Activated CD4-positive, alpha-beta memory T cell treated with anti-CD3 and anti-CD28 coated beads for 36 hours (primary cell): ENCODE measurements at regions of chr22 and their contacts with region 1.

Region 1: DNA sequence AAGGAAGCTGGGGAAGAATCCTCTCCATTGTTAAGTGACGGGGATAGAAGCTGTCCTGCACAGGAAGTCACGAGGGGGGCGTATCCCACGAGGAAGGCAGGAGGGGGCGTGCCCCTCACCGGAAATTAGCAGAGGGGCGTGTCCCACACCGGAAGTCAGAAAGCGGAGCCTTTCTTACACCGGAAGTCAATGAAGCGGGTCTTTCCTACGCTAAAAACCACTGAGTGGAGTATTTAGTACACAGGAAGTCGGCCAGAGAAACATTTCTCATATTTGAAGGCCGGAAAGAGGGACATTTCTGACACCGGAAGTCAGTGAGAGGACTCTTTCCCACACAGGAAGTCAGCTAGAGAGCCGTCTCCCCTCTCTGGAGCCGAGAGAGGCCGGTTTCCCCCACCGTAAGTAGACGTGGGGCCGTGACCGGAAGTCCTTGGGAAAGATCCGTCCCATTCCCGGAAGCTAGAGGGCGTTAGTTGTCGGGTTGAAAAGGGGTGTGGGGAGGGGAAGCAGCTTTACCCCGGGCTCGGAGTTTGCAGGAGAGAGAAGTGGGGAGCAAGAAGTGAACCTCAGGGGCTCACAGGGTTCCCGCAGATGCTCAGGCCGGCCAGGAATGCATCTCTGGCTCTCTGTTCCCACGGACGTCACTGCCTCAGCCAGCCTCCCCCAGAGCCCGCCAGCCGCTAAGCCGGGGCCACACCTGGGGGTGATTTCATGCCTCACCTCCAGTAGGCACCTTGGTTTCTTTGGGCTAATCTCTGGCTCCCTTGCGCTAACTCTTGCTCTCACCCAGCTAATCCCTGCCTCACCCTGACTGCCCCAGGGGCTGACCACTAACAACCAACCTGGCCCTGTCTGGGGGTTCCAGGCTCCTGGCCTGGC is 15.4 kb downstream of the MIAT start:
- DNase-seq: peak; percentile 97
- H3K4me3 Mint-ChIP-seq: peak overlapping the region; percentile 94
- H3K27ac Mint-ChIP-seq: peak overlapping the region; percentile 100
- H3K4me1 Mint-ChIP-seq: peaks cover 67% of the 10 kb centered on the region
- H3K27me3 Mint-ChIP-seq: no peaks in the 10 kb centered on the region

Region 2: GRCh38 chr22:26470807-26471206 is 202.0 kb before region 1 on chr22:
- CTCF ChIA-PET with region 1: no interaction called
- POLR2A ChIA-PET with region 1: no interaction called
- intact Hi-C with region 1: no loop called
- DNase-seq: no peak
- H3K4me3 Mint-ChIP-seq: no peak overlapping the region
- H3K27ac Mint-ChIP-seq: no peak overlapping the region
- H3K4me1 Mint-ChIP-seq: peaks cover 5% of the 10 kb centered on the region
- H3K27me3 Mint-ChIP-seq: no peaks in the 10 kb centered on the region

Region 3: DNA sequence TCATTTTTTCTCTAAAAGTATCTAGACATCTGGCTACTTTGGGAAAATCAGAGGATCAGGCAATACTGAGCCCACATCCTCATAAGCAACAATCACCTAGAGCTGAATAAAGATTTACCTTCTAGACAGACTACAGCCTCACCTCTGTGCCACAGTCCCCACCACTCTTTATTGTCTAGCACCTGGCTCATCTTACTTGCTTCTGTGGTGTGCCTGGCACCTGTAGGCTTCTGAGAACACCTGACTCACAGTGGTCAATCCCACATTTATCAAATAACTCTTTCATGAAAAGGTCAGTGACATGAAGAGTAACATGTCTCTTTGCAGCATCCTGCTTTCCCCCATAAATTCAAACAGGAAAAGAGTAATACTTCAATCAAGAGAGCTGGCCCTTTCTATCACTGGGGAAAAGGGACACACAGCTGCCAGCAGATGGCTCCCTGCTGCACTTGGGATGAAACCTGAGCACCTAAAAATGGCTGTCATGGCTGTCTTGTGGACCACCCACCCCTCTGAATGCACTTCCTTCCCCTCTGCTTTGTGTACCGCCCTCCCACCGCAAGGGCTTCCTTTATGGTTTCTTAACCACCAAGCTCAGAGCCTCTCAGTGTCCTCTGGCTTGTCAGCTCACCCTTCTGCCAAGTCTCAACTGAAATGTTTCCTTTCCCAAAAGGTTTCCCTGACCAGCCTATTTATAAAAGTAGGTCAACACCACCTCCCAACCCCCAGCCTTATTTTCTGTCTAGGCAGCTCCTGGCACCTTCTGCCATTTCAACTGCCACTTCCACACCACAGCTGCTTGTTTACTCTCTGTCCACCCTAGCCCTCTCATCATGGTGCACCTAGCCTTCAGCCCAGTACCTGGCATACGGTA is 169.9 kb before region 1 on chr22:
- CTCF ChIA-PET with region 1: interaction called, 7 read pairs
- POLR2A ChIA-PET with region 1: interaction called, 4 read pairs
- intact Hi-C with region 1: loop called (anchors 5 kb)
- DNase-seq: peak; percentile 75
- H3K4me3 Mint-ChIP-seq: no peak overlapping the region
- H3K27ac Mint-ChIP-seq: peak overlapping the region; percentile 87
- H3K4me1 Mint-ChIP-seq: peaks cover 20% of the 10 kb centered on the region
- H3K27me3 Mint-ChIP-seq: no peaks in the 10 kb centered on the region

Region 4: GRCh38 chr22:26610072-26610958 is 62.5 kb before region 1 on chr22:
- CTCF ChIA-PET with region 1: no interaction called
- POLR2A ChIA-PET with region 1: no interaction called
- intact Hi-C with region 1: no loop called
- DNase-seq: peak; percentile 80
- H3K4me3 Mint-ChIP-seq: no peak overlapping the region
- H3K27ac Mint-ChIP-seq: peak overlapping the region; percentile 50
- H3K4me1 Mint-ChIP-seq: peaks cover 21% of the 10 kb centered on the region
- H3K27me3 Mint-ChIP-seq: no peaks in the 10 kb centered on the region

Region 5: GRCh38 chr22:26650722-26651421 is 22.0 kb before region 1 on chr22:
- CTCF ChIA-PET with region 1: interaction called, 6 read pairs
- POLR2A ChIA-PET with region 1: interaction called, 7 read pairs
- intact Hi-C with region 1: loop called (anchors 2 kb)
- DNase-seq: peak; percentile 62
- H3K4me3 Mint-ChIP-seq: no peak overlapping the region
- H3K27ac Mint-ChIP-seq: peak overlapping the region; percentile 48
- H3K4me1 Mint-ChIP-seq: peaks cover 52% of the 10 kb centered on the region
- H3K27me3 Mint-ChIP-seq: no peaks in the 10 kb centered on the region

Region 6: DNA sequence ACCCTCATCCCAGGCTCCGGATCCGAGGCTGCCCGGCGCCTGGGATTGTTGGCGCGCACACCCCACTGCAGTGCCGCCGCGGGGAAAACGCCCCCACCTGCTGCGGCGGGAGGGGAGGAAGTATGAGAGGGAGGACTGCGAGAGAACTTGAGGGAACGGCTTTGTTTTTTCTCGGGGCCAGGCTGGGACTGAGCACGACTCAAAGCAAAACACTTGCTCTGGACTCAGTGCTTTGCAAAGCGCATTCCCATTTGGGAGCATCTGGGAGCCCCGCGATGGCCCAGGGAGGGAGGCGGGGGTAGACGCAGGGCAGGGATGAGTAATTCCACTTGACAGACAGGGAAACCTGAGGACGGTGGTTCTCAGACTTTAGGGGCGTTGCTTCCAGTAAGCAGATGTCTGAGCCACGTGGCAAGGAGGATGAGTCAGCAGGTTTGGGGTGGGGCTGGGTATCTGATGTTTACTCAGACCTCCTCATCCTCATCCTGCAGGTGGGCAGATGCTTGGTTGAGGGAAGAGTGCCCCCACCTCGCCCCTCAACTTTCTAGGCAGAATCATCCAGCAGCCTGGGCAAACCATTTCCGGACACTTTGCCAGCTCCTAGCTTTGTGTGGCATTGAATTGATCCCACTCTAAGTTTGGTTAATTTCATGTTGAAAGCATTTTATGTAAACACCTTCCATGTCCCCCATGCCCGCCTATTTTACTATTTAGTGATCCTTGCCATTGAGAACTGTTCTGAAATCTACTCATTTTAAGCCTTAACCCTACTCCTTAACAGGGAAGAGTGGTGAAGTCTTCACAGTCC is 14.0 kb before region 1 on chr22:
- CTCF ChIA-PET with region 1: interaction called, 28 read pairs
- POLR2A ChIA-PET with region 1: interaction called, 4 read pairs
- intact Hi-C with region 1: loop called (anchors 1 kb)
- DNase-seq: peak; percentile 94
- H3K4me3 Mint-ChIP-seq: peak overlapping the region; percentile 95
- H3K27ac Mint-ChIP-seq: peak overlapping the region; percentile 88
- H3K4me1 Mint-ChIP-seq: peaks cover 34% of the 10 kb centered on the region
- H3K27me3 Mint-ChIP-seq: no peaks in the 10 kb centered on the region